MCF 10A (cell line): ENCODE measurements at regions of chr14 and their contacts with region 1.

Region 1: GRCh38 chr14:50559990-50560930 is at the start of gene ATL1:
- DNase-seq: peak; percentile 77
- H3K4me3 Mint-ChIP-seq: peak within 1 kb of the TSS; percentile 88
- H3K27ac Mint-ChIP-seq: peak within 1 kb of the TSS; percentile 93
- H3K4me1 Mint-ChIP-seq: peaks cover 10% of the 10 kb centered on the region
- H3K27me3 Mint-ChIP-seq: no peaks in the 10 kb centered on the region
- CTCF ChIP-seq: no peak
- total RNA-seq, gene ATL1: 3.2 and 3.3 TPM in 2 replicates

Region 2: GRCh38 chr14:50573858-50574257 is 13.6 kb after region 1 on chr14:
- CTCF ChIA-PET with region 1: interaction called, 4 read pairs
- POLR2A ChIA-PET with region 1: interaction called, 21 read pairs
- intact Hi-C with region 1: no loop called
- DNase-seq: peak; percentile 3
- H3K4me3 Mint-ChIP-seq: no peak overlapping the region
- H3K27ac Mint-ChIP-seq: no peak overlapping the region
- H3K4me1 Mint-ChIP-seq: peaks cover 11% of the 10 kb centered on the region
- H3K27me3 Mint-ChIP-seq: no peaks in the 10 kb centered on the region
- CTCF ChIP-seq: no peak

Region 3: GRCh38 chr14:50599700-50600444 is 39.6 kb after region 1 on chr14:
- CTCF ChIA-PET with region 1: interaction called, 5 read pairs
- POLR2A ChIA-PET with region 1: interaction called, 57 read pairs
- intact Hi-C with region 1: no loop called
- DNase-seq: peak; percentile 72
- H3K4me3 Mint-ChIP-seq: peak overlapping the region; percentile 59
- H3K27ac Mint-ChIP-seq: peak overlapping the region; percentile 98
- H3K4me1 Mint-ChIP-seq: peaks cover 43% of the 10 kb centered on the region
- H3K27me3 Mint-ChIP-seq: no peaks in the 10 kb centered on the region
- CTCF ChIP-seq: peak; percentile 37